ENCODE measurements at regions of chr16 and their contacts with region 1.

Region 1: GRCh38 chr16:8634991-8635736 is 13.7 kb downstream of the METTL22 start:
- DNase-seq: peak; percentile 74
- ATAC-seq: peak; percentile 91
- H3K4me3 Mint-ChIP-seq: no peak overlapping the region
- H3K27ac Mint-ChIP-seq: 0 out of 2 replicates have a peak overlapping the region, but pooled peaks have one; percentile 35
- H3K4me1 Mint-ChIP-seq: no peaks in the 10 kb centered on the region
- H3K27me3 Mint-ChIP-seq: no peaks in the 10 kb centered on the region
- CTCF ChIP-seq: peak; percentile 59

Region 2: GRCh38 chr16:8567750-8568617 is 67.2 kb before region 1 on chr16:
- CTCF ChIA-PET with region 1: interaction called, 132 read pairs
- POLR2A ChIA-PET with region 1: interaction called, 5 read pairs
- DNase-seq: peak; percentile 85
- ATAC-seq: peak; percentile 67
- H3K4me3 Mint-ChIP-seq: no peak overlapping the region
- H3K27ac Mint-ChIP-seq: no peak overlapping the region
- H3K4me1 Mint-ChIP-seq: peaks cover 22% of the 10 kb centered on the region
- H3K27me3 Mint-ChIP-seq: 0 out of 2 replicates have a peak, but pooled peaks cover 2% of the 10 kb centered on the region
- CTCF ChIP-seq: peak; percentile 98

Region 3: GRCh38 chr16:8581831-8582580 is 53.2 kb before region 1 on chr16:
- CTCF ChIA-PET with region 1: interaction called, 23 read pairs
- POLR2A ChIA-PET with region 1: no interaction called
- DNase-seq: no peak
- ATAC-seq: peak; percentile 29; the same call in 1 of the 2 replicates
- H3K4me3 Mint-ChIP-seq: no peak overlapping the region
- H3K27ac Mint-ChIP-seq: no peak overlapping the region
- H3K4me1 Mint-ChIP-seq: peaks cover 3% of the 10 kb centered on the region
- H3K27me3 Mint-ChIP-seq: peaks cover 9% of the 10 kb centered on the region
- CTCF ChIP-seq: no peak

Region 4: DNA sequence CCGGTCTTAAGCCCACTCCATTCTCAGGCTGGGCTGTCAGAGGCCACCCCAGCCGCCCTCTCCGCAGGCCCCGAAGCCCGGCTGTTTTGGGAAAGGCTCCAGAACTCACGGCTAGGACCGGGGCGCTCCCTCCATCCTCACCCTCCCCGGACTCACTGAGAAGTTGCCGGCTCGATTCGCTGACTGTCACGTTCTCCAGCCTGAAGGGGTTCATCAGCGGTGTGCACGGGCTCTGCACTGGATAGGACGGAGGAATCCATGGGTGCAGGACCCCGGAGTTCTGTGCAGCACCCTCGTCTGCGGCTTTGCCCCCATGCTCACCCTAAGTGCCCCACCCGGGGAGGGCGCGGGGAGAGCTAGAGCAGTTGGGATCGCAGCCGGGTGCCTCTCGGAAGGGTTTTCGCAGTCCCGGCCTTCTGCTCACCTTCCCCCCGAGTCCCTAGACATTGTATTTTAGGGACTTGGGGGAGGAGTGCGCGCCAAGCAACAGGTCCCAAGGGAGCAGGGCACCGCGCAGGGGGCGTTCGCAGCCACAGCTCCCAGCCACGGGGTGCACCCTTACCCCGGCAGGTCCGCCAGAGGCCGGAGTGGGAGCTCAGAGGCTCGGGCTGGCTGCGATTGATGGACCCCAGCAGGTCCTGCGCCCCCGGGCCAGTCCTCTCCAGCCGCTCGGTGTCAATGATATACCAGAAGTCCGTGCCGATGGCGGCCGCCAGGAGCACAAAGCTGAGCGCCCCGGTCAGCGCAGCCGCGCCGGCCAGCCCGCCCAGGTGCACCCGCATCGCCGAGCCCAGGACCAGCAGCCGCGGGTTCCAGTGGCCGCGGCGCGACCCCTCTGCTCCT is 45.9 kb before region 1 on chr16:
- CTCF ChIA-PET with region 1: interaction called, 24 read pairs
- POLR2A ChIA-PET with region 1: no interaction called
- DNase-seq: peak; percentile 65
- ATAC-seq: peak; percentile 55
- H3K4me3 Mint-ChIP-seq: no peak overlapping the region
- H3K27ac Mint-ChIP-seq: no peak overlapping the region
- H3K4me1 Mint-ChIP-seq: peaks cover 12% of the 10 kb centered on the region
- H3K27me3 Mint-ChIP-seq: peaks cover 3% of the 10 kb centered on the region
- CTCF ChIP-seq: no peak

Region 5: GRCh38 chr16:8600144-8600775 is 34.9 kb before region 1 on chr16:
- CTCF ChIA-PET with region 1: interaction called, 12 read pairs
- POLR2A ChIA-PET with region 1: no interaction called
- DNase-seq: no peak
- ATAC-seq: no peak
- H3K4me3 Mint-ChIP-seq: no peak overlapping the region
- H3K27ac Mint-ChIP-seq: no peak overlapping the region
- H3K4me1 Mint-ChIP-seq: peaks cover 11% of the 10 kb centered on the region
- H3K27me3 Mint-ChIP-seq: peaks cover 36% of the 10 kb centered on the region
- CTCF ChIP-seq: no peak

Region 6: DNA sequence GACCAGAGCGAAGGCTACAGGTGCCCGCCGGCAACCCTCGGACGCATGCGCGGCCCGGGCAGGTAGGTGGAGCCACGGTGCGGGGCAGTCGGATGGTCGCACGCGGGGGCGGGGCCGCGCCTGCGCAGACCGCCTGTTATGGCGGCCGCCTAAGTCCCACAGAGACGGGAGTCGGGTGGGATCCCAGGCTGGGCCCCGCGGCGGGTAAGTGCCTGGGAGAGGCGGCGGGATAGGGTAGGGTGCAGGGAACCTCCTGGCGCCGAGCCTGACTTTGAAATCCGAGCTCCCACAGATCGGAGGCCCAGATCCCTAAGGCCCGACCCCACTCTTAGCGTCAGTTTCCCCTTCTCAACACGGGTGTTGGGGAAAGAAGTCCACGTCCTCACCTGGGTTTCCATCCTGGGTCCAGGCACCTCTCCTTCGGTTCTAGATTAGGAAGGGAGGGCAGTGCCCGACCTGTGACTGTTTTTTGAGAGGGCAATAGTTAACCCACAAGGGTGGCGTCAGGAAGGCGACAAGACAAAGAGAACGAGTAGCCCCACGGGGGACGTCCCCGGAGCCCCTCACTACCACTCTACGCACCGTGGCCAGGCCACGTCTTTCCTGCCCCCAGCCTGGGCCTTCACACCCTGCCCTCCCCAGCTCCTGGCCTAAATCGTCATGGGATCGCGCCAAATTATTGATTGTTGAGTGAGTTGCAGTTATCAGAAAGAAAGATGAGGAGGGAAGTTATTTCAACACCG is 13.4 kb before region 1 on chr16 and contains the start of gene METTL22:
- CTCF ChIA-PET with region 1: interaction called, 17 read pairs
- POLR2A ChIA-PET with region 1: interaction called, 6 read pairs
- DNase-seq: peak; percentile 94
- ATAC-seq: peak; percentile 94
- H3K4me3 Mint-ChIP-seq: peak within 1 kb of the TSS; percentile 100
- H3K27ac Mint-ChIP-seq: peak within 1 kb of the TSS; percentile 97
- H3K4me1 Mint-ChIP-seq: peaks cover 9% of the 10 kb centered on the region; the same call in 1 of the 2 replicates
- H3K27me3 Mint-ChIP-seq: peaks cover 5% of the 10 kb centered on the region; the same call in 1 of the 2 replicates
- CTCF ChIP-seq: no peak
- total RNA-seq, gene METTL22: 48.1 to 82.0 TPM (median 52.9 TPM) in 3 replicates

Region 7: GRCh38 chr16:8649829-8650554 is 14.8 kb after region 1 on chr16:
- CTCF ChIA-PET with region 1: interaction called, 15 read pairs
- POLR2A ChIA-PET with region 1: no interaction called
- DNase-seq: no peak
- ATAC-seq: no peak
- H3K4me3 Mint-ChIP-seq: no peak overlapping the region
- H3K27ac Mint-ChIP-seq: no peak overlapping the region
- H3K4me1 Mint-ChIP-seq: peaks cover 5% of the 10 kb centered on the region; the same call in 1 of the 2 replicates
- H3K27me3 Mint-ChIP-seq: no peaks in the 10 kb centered on the region
- CTCF ChIP-seq: no peak

Region 8: GRCh38 chr16:8692502-8692901 is 57.3 kb after region 1 on chr16:
- CTCF ChIA-PET with region 1: no interaction called
- POLR2A ChIA-PET with region 1: no interaction called
- DNase-seq: no peak
- ATAC-seq: no peak
- H3K4me3 Mint-ChIP-seq: no peak overlapping the region
- H3K27ac Mint-ChIP-seq: no peak overlapping the region
- H3K4me1 Mint-ChIP-seq: 0 out of 2 replicates have a peak, but pooled peaks cover 3% of the 10 kb centered on the region
- H3K27me3 Mint-ChIP-seq: no peaks in the 10 kb centered on the region; the same call in 1 of the 2 replicates
- CTCF ChIP-seq: no peak

Region 9: DNA sequence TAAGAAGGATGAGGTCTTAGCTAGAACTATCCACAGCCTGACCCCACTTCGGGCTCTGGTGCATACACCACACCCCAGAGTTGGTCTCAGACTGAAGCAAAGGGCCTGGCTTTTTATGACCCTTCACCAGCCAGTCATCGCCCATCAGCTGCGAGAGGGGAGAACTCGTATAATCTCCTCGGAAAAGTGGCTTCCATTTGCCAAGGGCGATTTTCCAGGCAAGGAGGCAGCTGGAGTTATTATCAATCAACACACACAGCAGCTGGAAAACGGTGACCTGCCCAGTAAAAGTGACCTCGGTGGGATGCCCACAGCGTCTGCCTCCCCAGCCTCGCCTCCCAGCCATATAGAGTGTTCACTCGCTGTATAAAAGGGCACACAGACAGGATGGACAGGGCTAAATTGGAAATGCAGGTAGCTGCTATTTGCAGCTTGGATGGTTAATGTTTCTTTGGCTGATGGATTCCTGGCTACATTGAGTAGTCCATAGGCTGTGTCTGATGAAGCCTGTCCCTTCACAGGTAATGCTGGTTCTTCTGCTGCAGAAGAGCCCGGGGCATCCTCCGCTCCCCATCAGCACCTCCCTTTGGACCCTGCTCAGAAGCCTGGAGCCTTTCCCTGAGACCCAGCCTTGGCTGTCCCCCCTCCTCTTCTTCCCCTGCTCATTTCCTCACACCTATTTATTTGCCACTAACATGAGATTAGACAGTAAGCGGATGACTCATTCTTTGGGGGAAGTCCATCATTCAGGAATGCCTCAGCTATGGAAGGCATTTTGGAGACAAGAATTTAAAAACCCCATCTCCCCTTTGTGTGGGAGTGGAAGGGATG is 116.5 kb after region 1 on chr16:
- CTCF ChIA-PET with region 1: no interaction called
- POLR2A ChIA-PET with region 1: no interaction called
- DNase-seq: no peak
- ATAC-seq: no peak
- H3K4me3 Mint-ChIP-seq: no peak overlapping the region
- H3K27ac Mint-ChIP-seq: no peak overlapping the region
- H3K4me1 Mint-ChIP-seq: no peaks in the 10 kb centered on the region
- H3K27me3 Mint-ChIP-seq: no peaks in the 10 kb centered on the region
- CTCF ChIP-seq: no peak

Measured in WTC11 (cell line).